Activated CD8-positive, alpha-beta T cell treated with anti-CD3 and anti-CD28 coated beads, Interleukin-2, amount 10 ng/mL, durations not matched to agents 7 days and 5 days (primary cell): ENCODE measurements at regions of chr6 and their contacts with region 1.

Region 1: DNA sequence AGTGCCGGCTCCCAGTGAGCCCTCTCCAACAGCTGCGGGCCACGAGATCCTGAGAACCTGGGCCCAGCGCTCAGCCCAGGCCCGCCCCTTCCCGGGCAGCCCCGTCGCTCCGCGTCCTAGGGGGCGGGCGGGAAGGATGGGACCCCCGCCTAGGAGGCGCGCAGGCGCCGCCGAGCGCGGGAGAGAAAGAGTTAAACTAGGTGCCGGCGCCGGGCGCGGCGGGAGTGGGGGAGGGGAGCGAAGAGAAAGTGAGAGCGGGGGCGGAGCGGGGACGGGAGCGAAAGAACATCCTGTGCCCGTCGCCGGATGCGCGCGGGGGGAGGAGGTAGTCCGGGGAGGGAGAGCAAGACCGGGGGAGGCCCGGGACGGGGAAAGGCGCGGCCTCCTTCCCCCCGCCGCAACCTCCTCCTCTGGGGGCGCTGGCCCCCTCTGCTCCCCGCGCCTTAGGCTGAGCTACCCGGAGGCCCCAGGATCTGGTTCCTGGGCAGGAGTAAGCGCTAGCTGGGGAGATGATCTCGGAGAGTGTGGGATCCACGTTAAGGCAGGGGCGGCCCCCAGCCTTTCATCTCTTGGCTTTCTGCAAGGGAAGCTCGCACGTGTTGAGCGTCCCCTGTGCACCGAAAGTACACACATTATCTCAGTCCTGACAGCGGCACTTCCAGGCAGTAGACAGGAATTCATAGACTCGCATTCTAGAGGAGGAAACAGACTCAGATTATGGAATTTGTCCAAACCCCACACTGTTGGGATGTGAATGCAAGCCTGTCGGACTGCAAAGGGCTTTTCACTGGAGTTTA is 4.9 kb upstream of the ARMC12 start:
- DNase-seq: peak; percentile 98
- ATAC-seq: peak; percentile 63
- H3K4me3 Mint-ChIP-seq: peak overlapping the region; percentile 85
- H3K27ac Mint-ChIP-seq: peak overlapping the region; percentile 99
- H3K4me1 Mint-ChIP-seq: peaks cover 77% of the 10 kb centered on the region
- H3K27me3 Mint-ChIP-seq: no peaks in the 10 kb centered on the region

Region 2: GRCh38 chr6:35468181-35468979 is 263.6 kb before region 1 on chr6 and contains the start of gene RPL10A:
- CTCF ChIA-PET with region 1: interaction called, 10 read pairs
- POLR2A ChIA-PET with region 1: interaction called, 3 read pairs
- DNase-seq: peak; percentile 98
- ATAC-seq: peak; percentile 89
- H3K4me3 Mint-ChIP-seq: peak within 1 kb of the TSS; percentile 83
- H3K27ac Mint-ChIP-seq: peak within 1 kb of the TSS; percentile 99
- H3K4me1 Mint-ChIP-seq: peaks cover 39% of the 10 kb centered on the region
- H3K27me3 Mint-ChIP-seq: no peaks in the 10 kb centered on the region
- total RNA-seq, gene RPL10A: 1,398 to 1,443 TPM

Region 3: GRCh38 chr6:35569011-35569461 is 162.9 kb before region 1 on chr6:
- CTCF ChIA-PET with region 1: interaction called, 259 read pairs
- POLR2A ChIA-PET with region 1: no interaction called
- DNase-seq: peak; percentile 50
- ATAC-seq: peak; percentile 71
- H3K4me3 Mint-ChIP-seq: no peak overlapping the region
- H3K27ac Mint-ChIP-seq: no peak overlapping the region
- H3K4me1 Mint-ChIP-seq: peaks cover 3% of the 10 kb centered on the region
- H3K27me3 Mint-ChIP-seq: peaks cover 14% of the 10 kb centered on the region

Region 4: GRCh38 chr6:35601331-35602132 is 130.4 kb before region 1 on chr6:
- CTCF ChIA-PET with region 1: interaction called, 60 read pairs
- POLR2A ChIA-PET with region 1: interaction called, 5 read pairs
- DNase-seq: peak; percentile 82
- ATAC-seq: peak; percentile 84
- H3K4me3 Mint-ChIP-seq: peak overlapping the region; percentile 64
- H3K27ac Mint-ChIP-seq: peak overlapping the region; percentile 86
- H3K4me1 Mint-ChIP-seq: peaks cover 67% of the 10 kb centered on the region
- H3K27me3 Mint-ChIP-seq: no peaks in the 10 kb centered on the region

Region 5: GRCh38 chr6:35647400-35647799 is 84.5 kb before region 1 on chr6:
- CTCF ChIA-PET with region 1: interaction called, 49 read pairs
- POLR2A ChIA-PET with region 1: no interaction called
- DNase-seq: no peak
- ATAC-seq: no peak
- H3K4me3 Mint-ChIP-seq: no peak overlapping the region
- H3K27ac Mint-ChIP-seq: no peak overlapping the region
- H3K4me1 Mint-ChIP-seq: peaks cover 24% of the 10 kb centered on the region
- H3K27me3 Mint-ChIP-seq: no peaks in the 10 kb centered on the region

Region 6: GRCh38 chr6:35669451-35670045 is 62.4 kb before region 1 on chr6:
- CTCF ChIA-PET with region 1: interaction called, 72 read pairs
- POLR2A ChIA-PET with region 1: interaction called, 10 read pairs
- DNase-seq: no peak
- ATAC-seq: peak; percentile 72
- H3K4me3 Mint-ChIP-seq: peak overlapping the region; percentile 71
- H3K27ac Mint-ChIP-seq: peak overlapping the region; percentile 72
- H3K4me1 Mint-ChIP-seq: peaks cover 59% of the 10 kb centered on the region
- H3K27me3 Mint-ChIP-seq: no peaks in the 10 kb centered on the region

Region 7: GRCh38 chr6:35710241-35710847 is 21.6 kb before region 1 on chr6:
- CTCF ChIA-PET with region 1: interaction called, 12 read pairs
- POLR2A ChIA-PET with region 1: interaction called, 4 read pairs
- DNase-seq: no peak
- ATAC-seq: peak; percentile 82
- H3K4me3 Mint-ChIP-seq: no peak overlapping the region
- H3K27ac Mint-ChIP-seq: no peak overlapping the region
- H3K4me1 Mint-ChIP-seq: peaks cover 34% of the 10 kb centered on the region
- H3K27me3 Mint-ChIP-seq: no peaks in the 10 kb centered on the region